Panc1 (cell line): ENCODE measurements at regions of chr7 and their contacts with region 1.

Region 1: DNA sequence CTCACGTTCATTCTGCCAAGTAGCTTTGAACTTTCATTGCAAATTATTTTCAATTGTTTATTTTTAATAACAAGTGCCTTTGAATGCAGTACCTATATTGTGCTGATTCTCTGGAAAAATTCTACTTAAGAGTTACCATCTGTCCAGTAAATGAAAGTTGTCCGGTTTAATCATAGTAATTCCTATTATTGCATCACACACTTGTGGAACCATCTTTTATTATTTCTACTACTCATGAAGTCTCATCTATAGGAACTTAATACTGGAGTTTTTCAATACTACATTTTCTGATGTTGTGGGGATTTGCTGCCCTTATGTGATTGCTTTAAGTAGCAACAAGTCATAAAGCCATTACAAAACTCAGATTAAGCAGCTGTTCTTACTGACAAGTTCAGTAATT is 16.5 kb upstream of the SKAP2 start:
- DNase-seq: no peak
- ATAC-seq: no peak
- H3K4me3 ChIP-seq: no peak overlapping the region
- H3K27ac ChIP-seq: no peak overlapping the region
- H3K4me1 ChIP-seq: no peaks in the 10 kb centered on the region
- H3K27me3 ChIP-seq: no peaks in the 10 kb centered on the region
- CTCF ChIP-seq: no peak

Region 2: DNA sequence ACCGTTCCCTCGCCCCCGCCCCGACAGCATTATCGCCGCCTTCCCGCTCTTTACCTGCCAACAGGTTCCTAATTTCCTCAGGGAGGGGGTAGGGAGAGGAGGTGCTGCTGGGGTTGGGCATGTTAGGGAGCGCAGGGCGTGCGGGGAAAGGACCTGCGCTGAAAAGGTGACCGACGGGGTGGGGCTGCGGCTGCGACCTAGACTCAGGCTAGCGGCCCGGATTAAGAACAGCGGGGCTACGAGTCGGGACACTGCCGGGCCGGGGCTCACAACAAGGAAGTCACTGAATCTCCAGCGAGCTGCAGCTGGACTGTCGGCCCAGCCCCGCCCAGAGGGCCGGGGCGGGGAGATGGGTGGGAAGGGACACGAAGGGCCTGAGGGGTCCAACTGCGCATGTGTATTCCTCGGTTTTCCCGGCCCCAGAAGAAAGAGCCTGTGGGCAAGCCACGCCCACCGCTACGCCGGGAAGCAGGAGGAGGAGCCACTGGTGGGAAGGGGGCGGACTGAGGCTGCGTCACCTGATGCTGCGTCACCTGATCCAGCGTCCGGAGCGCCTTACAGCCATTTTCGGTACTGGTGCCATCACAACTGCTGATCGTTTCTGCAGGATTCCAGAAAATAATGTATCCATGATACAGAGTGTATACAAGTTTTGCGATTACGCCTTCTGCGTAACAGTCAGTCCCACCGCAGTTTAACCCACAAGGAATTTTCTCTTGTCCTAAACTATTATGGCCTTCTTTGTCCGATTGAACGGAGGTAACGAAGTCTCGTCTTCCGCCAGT is 16.4 kb before region 1 on chr7 and contains the start of gene SKAP2:
- CTCF ChIA-PET with region 1: no interaction called
- POLR2A ChIA-PET with region 1: no interaction called
- in situ Hi-C with region 1: no loop called
- intact Hi-C with region 1: no loop called
- DNase-seq: peak; percentile 98
- ATAC-seq: peak; percentile 98
- H3K4me3 ChIP-seq: peak within 1 kb of the TSS; percentile 84 to 96
- H3K27ac ChIP-seq: peak within 1 kb of the TSS; percentile 95
- H3K4me1 ChIP-seq: peaks cover 34% of the 10 kb centered on the region
- H3K27me3 ChIP-seq: no peaks in the 10 kb centered on the region
- CTCF ChIP-seq: no peak
- total RNA-seq, gene SKAP2: 66.8 TPM

Region 3: DNA sequence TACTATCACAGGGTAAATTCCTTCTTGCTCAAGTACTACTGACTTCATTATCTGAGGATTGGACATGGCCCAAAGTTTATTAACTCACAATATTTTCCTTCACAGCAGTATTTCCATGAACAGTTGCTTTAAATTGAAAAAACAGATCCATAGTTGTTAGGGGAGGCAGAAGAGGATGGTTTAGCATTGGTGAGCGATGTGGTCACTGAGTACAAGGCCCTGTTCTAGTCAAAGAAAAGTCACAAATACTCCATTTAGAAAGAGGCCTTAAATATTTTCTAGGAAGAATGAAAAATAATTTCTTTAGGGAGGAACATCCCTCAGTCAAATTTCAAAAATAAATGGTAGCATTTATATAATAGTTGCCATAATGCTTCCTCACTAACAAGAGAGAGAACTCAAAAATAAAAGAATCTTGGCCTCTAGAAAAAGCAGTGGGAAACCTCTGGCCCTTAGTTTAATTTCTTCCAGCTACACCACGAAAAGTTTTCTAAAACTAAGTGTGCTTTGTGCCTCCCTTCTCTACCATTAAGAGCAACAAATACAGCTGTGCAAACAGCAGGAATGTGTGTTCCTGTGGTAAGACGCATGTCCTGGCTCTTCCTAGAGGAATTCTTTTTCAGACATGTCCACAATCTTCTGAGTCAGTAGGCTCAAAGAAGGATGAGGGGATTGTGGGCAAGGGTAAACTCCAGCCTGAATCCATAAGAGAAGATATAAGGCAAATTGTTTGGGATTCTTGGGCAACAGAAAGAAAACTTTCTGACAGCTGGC is 109.2 kb after region 1 on chr7:
- CTCF ChIA-PET with region 1: no interaction called
- POLR2A ChIA-PET with region 1: interaction called, 16 read pairs
- in situ Hi-C with region 1: no loop called
- intact Hi-C with region 1: no loop called
- DNase-seq: no peak
- ATAC-seq: no peak
- H3K4me3 ChIP-seq: no peak overlapping the region
- H3K27ac ChIP-seq: no peak overlapping the region; the same call in 1 of the 2 replicates
- H3K4me1 ChIP-seq: no peaks in the 10 kb centered on the region
- H3K27me3 ChIP-seq: no peaks in the 10 kb centered on the region
- CTCF ChIP-seq: no peak

Region 4: DNA sequence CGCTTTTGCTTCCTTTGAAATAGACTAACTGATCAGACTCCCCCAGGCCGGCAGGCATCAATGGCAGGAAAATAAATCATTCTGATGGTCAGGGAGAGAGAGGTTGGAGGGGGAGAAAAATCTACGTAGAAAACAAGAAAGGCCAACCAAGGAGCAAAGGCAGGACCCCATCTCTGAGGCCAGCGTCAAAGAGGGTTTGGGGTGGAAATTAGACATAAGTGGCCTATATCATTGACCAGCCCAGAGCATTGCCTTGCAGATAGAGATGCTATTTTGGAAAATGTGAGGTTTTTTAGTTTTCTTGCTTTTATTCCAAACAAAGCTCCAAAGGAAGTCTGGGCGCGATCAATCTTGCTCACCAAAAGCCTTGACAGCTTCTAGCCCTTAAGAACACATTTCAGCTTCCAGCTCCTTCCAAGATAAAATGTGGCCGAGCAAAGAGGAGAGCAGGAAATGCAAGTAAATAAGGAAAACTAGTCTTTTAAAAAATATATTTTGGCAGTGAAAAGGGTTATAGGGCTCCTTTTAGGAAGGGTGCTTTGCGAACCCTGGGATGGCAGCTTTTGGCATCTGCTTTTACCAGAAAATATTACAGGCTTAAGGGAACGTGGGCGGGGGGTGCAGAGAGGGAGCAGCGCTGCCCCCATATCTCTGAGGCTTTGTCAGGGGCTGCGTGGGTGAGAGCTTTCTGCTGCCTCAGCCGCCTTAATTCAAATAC is 223.6 kb after region 1 on chr7:
- CTCF ChIA-PET with region 1: no interaction called
- POLR2A ChIA-PET with region 1: interaction called, 11 read pairs
- in situ Hi-C with region 1: no loop called
- intact Hi-C with region 1: no loop called
- DNase-seq: no peak
- ATAC-seq: no peak
- H3K4me3 ChIP-seq: peak overlapping the region in 1 of 2 experiments; percentile 52; a peak in 2 of 4 replicates
- H3K27ac ChIP-seq: peak overlapping the region; percentile 85
- H3K4me1 ChIP-seq: peaks cover 74% of the 10 kb centered on the region
- H3K27me3 ChIP-seq: no peaks in the 10 kb centered on the region
- CTCF ChIP-seq: no peak